MCF 10A (cell line): ENCODE measurements at regions of chr2 and their contacts with region 1.

Region 1: GRCh38 chr2:100381240-100381639 is 36.2 kb downstream of the CHST10 start:
- DNase-seq: peak; percentile 88
- H3K4me3 Mint-ChIP-seq: no peak overlapping the region
- H3K27ac Mint-ChIP-seq: no peak overlapping the region
- H3K4me1 Mint-ChIP-seq: peaks cover 8% of the 10 kb centered on the region
- H3K27me3 Mint-ChIP-seq: no peaks in the 10 kb centered on the region
- CTCF ChIP-seq: peak; percentile 86

Region 2: GRCh38 chr2:99559075-99559662 is 822.1 kb before region 1 on chr2:
- CTCF ChIA-PET with region 1: interaction called, 10 read pairs
- POLR2A ChIA-PET with region 1: no interaction called
- intact Hi-C with region 1: loop called (anchors 1 kb)
- DNase-seq: peak; percentile 76
- H3K4me3 Mint-ChIP-seq: no peak overlapping the region
- H3K27ac Mint-ChIP-seq: no peak overlapping the region
- H3K4me1 Mint-ChIP-seq: no peaks in the 10 kb centered on the region
- H3K27me3 Mint-ChIP-seq: peaks cover 26% of the 10 kb centered on the region
- CTCF ChIP-seq: peak; percentile 96

Region 3: DNA sequence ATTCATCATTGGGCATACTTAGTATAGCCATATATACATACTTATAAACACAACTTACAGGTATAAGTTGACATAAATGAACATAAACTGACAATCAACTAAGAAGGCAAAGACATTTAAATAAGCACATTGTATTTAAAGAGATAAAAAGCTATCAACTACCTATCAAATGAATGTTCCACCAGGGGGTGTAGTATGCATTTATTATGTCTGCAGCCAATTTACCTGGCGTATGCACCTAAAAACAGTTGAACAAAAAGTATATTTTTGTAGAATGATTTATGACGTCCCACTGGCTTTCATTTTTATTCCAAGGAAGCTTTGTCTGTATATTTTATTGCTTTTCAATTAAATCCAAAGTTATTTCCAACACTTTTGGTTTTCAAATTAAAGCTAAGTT is 562.4 kb before region 1 on chr2:
- CTCF ChIA-PET with region 1: interaction called, 4 read pairs
- POLR2A ChIA-PET with region 1: no interaction called
- intact Hi-C with region 1: loop called (anchors 10 kb)
- DNase-seq: peak; percentile 46
- H3K4me3 Mint-ChIP-seq: no peak overlapping the region
- H3K27ac Mint-ChIP-seq: no peak overlapping the region
- H3K4me1 Mint-ChIP-seq: peaks cover 4% of the 10 kb centered on the region
- H3K27me3 Mint-ChIP-seq: peaks cover 9% of the 10 kb centered on the region
- CTCF ChIP-seq: peak; percentile 55

Region 4: DNA sequence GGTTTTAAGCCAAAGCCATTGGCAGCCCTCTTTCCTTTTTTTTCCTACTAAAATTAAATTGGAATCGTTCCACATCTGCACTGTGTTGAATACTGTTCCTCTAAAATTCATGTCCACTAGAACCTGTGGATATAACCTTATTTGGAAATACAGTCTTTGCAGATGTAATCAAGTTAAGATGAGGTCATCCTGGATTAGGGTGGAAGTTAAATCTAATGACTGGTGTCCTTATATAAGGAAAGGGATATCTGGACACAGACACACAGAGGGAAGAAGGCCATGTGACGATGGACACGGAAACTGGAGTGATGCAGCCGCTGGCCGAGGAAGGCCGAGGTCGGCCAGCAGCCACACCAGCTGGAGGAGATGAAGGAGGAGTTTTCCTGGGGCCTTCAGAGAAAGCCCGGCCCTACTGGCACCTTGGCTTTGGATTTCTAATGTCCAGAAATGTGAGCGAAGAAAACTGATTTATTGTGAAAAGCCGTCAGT is 108.4 kb before region 1 on chr2:
- CTCF ChIA-PET with region 1: interaction called, 521 read pairs
- POLR2A ChIA-PET with region 1: no interaction called
- intact Hi-C with region 1: no loop called
- DNase-seq: no peak
- H3K4me3 Mint-ChIP-seq: no peak overlapping the region
- H3K27ac Mint-ChIP-seq: no peak overlapping the region
- H3K4me1 Mint-ChIP-seq: no peaks in the 10 kb centered on the region
- H3K27me3 Mint-ChIP-seq: no peaks in the 10 kb centered on the region
- CTCF ChIP-seq: no peak

Region 5: DNA sequence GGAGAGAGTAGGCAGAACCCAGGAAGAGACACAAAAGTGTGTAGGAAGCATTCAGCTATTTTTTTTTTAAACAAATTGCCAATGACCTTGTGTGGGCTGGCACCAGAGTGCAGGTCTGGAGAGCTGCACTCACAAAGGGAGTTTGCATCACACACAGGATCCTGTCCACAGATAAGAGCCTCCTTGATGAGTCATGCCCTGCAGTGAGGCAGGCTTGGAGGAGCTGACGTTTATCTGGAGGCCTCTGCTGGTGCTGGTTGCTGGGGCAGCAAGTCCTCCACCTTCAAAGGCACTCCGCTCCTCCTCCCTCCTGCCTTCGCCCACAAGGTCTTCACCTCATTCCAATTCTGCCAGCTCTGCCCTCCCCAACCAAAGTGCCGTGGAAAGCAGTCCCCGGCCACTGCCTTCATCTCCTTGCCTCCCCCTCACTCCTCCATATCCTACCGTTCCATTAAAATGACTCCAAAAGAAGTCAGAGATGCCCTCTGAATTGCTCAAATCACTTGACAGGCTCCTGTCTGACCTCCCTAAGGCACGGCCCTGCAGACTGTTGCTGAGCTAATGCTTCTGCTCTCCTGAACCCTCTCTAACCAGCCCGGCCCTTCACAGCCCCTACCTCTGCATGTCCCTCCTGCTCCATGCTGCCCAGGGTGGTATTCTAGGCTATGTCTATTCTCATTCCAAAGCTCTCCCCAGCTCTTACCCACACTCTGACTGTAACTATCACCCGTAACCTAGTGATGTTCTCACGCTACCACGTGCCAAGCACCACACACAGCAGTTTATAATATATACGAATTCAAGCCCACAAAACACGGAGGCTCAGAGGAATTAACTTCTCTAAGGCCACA is 89.9 kb before region 1 on chr2:
- CTCF ChIA-PET with region 1: interaction called, 38 read pairs
- POLR2A ChIA-PET with region 1: interaction called, 7 read pairs
- intact Hi-C with region 1: no loop called
- DNase-seq: peak; percentile 89
- H3K4me3 Mint-ChIP-seq: no peak overlapping the region
- H3K27ac Mint-ChIP-seq: no peak overlapping the region
- H3K4me1 Mint-ChIP-seq: no peaks in the 10 kb centered on the region
- H3K27me3 Mint-ChIP-seq: no peaks in the 10 kb centered on the region
- CTCF ChIP-seq: no peak

Region 6: DNA sequence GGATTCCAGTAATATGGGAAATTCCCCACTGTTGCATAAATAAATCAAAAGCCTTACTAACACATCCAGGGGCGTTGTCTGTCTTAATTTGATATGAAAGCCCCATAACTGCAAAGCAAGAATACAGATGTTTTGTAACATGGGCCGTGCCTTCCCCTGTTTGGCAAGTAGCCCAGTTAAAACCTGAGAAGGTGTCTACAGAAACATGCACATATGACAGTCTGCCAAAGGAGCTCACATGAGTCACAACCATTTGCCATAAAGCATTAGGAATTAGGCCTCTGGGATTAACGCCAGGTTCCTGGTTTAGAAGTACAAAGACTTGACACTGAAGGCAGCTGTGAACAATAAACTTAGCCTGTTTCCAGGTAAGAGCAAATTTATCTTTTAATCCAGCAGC is 15.8 kb before region 1 on chr2:
- CTCF ChIA-PET with region 1: interaction called, 38 read pairs
- POLR2A ChIA-PET with region 1: interaction called, 5 read pairs
- intact Hi-C with region 1: no loop called
- DNase-seq: peak; percentile 100
- H3K4me3 Mint-ChIP-seq: no peak overlapping the region
- H3K27ac Mint-ChIP-seq: peak overlapping the region; percentile 39
- H3K4me1 Mint-ChIP-seq: peaks cover 15% of the 10 kb centered on the region
- H3K27me3 Mint-ChIP-seq: no peaks in the 10 kb centered on the region
- CTCF ChIP-seq: no peak

Region 7: DNA sequence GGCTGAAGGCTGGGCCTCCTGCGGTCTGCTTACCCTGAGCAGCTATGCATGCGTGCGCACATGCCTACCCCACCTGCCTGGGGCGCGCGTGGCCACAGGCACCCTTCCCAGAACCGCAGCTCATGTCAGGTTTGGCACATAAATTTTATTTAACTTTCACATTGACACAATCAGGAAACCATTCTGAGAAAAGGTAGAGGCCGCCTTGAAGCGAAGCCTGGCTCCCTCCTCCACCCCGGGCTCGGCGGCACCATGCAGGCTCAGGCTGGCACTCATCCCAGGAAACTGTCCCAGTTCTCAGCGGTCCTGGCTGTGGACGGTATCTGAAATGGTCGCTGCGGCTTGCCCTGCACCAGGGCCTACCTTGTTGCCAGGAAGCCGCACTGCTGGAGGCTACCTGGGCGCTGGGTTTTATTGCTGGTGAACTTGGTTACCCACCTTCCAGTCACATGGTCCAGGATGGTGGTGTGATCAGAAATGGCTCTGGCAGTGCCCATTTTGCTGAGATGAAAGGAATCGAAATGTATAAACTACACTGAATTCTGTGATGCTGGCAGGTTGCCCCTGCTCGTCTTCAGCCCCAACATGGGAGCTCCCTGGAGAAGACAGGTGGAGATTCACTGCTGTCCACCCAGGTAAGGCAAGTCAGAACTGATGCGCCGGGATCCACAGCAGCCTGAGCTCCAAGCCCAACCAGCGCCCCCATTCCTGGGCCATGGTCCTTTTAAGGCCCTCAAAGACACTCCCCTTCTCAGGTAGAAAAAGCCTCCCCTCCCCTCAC is 10.7 kb after region 1 on chr2:
- CTCF ChIA-PET with region 1: interaction called, 14 read pairs
- POLR2A ChIA-PET with region 1: no interaction called
- intact Hi-C with region 1: no loop called
- DNase-seq: no peak
- H3K4me3 Mint-ChIP-seq: no peak overlapping the region
- H3K27ac Mint-ChIP-seq: no peak overlapping the region
- H3K4me1 Mint-ChIP-seq: no peaks in the 10 kb centered on the region
- H3K27me3 Mint-ChIP-seq: peaks cover 16% of the 10 kb centered on the region
- CTCF ChIP-seq: no peak